Mammary epithelial cell (primary cell): ENCODE measurements at regions of chr11 and their contacts with region 1.

Region 1: DNA sequence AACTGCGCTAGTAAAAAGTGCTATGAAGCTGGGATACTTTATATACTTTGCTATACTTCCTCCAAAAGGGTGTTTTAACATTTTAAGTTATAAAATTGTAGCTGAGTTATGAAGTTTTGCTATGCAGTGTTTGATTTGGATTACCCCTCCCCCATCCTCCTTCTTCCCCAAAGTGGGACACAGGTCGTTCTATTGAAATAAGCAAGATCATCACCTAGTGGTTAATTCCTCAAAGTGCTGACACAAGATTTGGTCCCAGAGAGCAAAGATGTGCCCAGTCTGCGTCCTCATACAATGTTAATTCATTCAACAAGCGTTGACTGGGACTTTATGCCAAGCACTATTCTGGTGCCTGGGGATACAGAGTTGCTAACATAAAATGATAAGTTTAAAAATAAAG is 78.5 kb downstream of the SPON1 start:
- DNase-seq: no peak
- H3K4me3 ChIP-seq: no peak overlapping the region
- H3K27ac ChIP-seq: no peak overlapping the region
- H3K4me1 ChIP-seq: peaks cover 10% of the 10 kb centered on the region
- H3K27me3 ChIP-seq: no peaks in the 10 kb centered on the region
- CTCF ChIP-seq: peak; percentile 40 to 55

Region 2: DNA sequence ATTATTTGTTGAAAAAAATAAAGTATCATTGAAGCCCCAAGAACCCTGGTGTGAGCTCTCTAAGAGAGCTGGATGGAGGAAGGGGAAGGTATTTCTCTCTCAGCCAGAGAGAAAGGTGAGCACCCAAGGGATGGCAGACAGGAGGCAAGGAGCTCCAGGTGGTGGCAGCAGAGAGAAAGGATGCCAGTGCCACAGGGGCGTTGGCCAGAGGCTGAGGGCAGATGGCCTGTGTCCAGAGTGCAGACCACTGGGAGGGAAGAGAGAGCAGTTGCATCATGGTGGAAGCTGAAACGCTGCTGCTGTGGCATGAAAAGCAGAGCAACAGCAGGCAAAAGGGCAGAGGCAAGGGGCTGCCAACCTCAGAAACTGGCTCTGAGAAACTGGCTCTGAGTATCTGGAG is 70.1 kb before region 1 on chr11:
- CTCF ChIA-PET with region 1: no interaction called
- dilution Hi-C with region 1: no loop called
- in situ Hi-C with region 1: no loop called
- intact Hi-C with region 1: loop called (anchors 5 kb)
- DNase-seq: peak; percentile 23
- H3K4me3 ChIP-seq: no peak overlapping the region
- H3K27ac ChIP-seq: no peak overlapping the region
- H3K4me1 ChIP-seq: no peaks in the 10 kb centered on the region
- H3K27me3 ChIP-seq: peaks cover 8% of the 10 kb centered on the region
- CTCF ChIP-seq: peak; percentile 75 to 93

Region 3: GRCh38 chr11:14027525-14027924 is 13.5 kb before region 1 on chr11:
- CTCF ChIA-PET with region 1: interaction called, 27 read pairs
- dilution Hi-C with region 1: no loop called
- in situ Hi-C with region 1: no loop called
- intact Hi-C with region 1: no loop called
- DNase-seq: no peak
- H3K4me3 ChIP-seq: no peak overlapping the region
- H3K27ac ChIP-seq: no peak overlapping the region
- H3K4me1 ChIP-seq: peaks cover 26% of the 10 kb centered on the region
- H3K27me3 ChIP-seq: no peaks in the 10 kb centered on the region
- CTCF ChIP-seq: no peak

Region 4: GRCh38 chr11:14148653-14149273 is 107.7 kb after region 1 on chr11:
- CTCF ChIA-PET with region 1: no interaction called
- dilution Hi-C with region 1: no loop called
- in situ Hi-C with region 1: no loop called
- intact Hi-C with region 1: no loop called
- DNase-seq: peak; percentile 45
- H3K4me3 ChIP-seq: no peak overlapping the region
- H3K27ac ChIP-seq: no peak overlapping the region
- H3K4me1 ChIP-seq: no peaks in the 10 kb centered on the region
- H3K27me3 ChIP-seq: no peaks in the 10 kb centered on the region
- CTCF ChIP-seq: peak; percentile 73 to 83

Region 5: DNA sequence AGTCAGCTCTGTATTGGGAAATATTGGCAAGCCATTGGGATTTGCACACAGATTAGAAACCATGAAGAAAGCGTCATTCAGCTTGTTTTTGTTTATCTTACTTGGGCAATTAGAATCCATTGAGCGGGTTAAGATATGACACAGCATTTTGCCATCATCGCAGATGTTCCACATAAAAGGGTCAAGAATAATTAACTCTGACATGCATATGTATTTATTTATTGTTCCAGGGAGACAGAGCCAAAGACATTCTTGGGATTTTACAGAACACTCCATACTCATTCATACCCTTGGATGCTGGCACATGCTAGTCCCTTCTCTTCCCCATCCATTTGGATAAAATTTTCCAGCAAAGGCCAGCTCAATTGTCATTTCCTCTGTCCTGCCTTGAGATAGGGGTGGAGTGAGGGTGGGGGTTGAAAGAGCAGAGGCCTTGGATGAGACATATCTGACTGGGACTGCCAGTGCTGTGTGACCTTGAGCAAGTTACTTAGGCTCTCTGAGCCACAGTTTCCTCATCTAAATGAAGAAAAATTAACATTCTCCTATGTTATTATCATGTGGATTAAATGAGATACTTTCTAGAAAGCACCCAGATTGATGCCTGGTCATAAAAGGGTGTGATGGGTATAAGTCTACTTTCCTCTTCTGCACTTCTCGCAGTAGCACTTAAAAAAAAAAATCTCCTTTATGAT is 138.2 kb after region 1 on chr11:
- CTCF ChIA-PET with region 1: no interaction called
- dilution Hi-C with region 1: no loop called
- in situ Hi-C with region 1: no loop called
- intact Hi-C with region 1: no loop called
- DNase-seq: no peak
- H3K4me3 ChIP-seq: no peak overlapping the region
- H3K27ac ChIP-seq: no peak overlapping the region
- H3K4me1 ChIP-seq: no peaks in the 10 kb centered on the region
- H3K27me3 ChIP-seq: peaks cover 2% of the 10 kb centered on the region
- CTCF ChIP-seq: no peak